ENCODE measurements at regions of chr16 and their contacts with region 1.

Region 1: GRCh38 chr16:660459-661183 is 7.3 kb upstream of the RHOT2 start:
- DNase-seq: peak; percentile 77
- ATAC-seq: peak; percentile 96
- H3K4me3 ChIP-seq: no peak overlapping the region
- H3K27ac ChIP-seq: no peak overlapping the region
- H3K4me1 ChIP-seq: peaks cover 5% of the 10 kb centered on the region
- H3K27me3 ChIP-seq: no peaks in the 10 kb centered on the region
- CTCF ChIP-seq: peak; percentile 37
- POLR2A ChIP-seq: no peak
- RAD21 ChIP-seq: peak; percentile 23

Region 2: GRCh38 chr16:578870-579405 is 81.7 kb before region 1 on chr16:
- CTCF ChIA-PET with region 1: no interaction called
- POLR2A ChIA-PET with region 1: no interaction called
- dilution Hi-C with region 1: no loop called
- in situ Hi-C with region 1: no loop called
- intact Hi-C with region 1: loop called (anchors 2 kb)
- DNase-seq: peak; percentile 65
- ATAC-seq: peak; percentile 91
- H3K4me3 ChIP-seq: no peak overlapping the region
- H3K27ac ChIP-seq: no peak overlapping the region
- H3K4me1 ChIP-seq: no peaks in the 10 kb centered on the region
- H3K27me3 ChIP-seq: no peaks in the 10 kb centered on the region
- CTCF ChIP-seq: peak; percentile 78
- POLR2A ChIP-seq: no peak
- RAD21 ChIP-seq: peak; percentile 85

Region 3: DNA sequence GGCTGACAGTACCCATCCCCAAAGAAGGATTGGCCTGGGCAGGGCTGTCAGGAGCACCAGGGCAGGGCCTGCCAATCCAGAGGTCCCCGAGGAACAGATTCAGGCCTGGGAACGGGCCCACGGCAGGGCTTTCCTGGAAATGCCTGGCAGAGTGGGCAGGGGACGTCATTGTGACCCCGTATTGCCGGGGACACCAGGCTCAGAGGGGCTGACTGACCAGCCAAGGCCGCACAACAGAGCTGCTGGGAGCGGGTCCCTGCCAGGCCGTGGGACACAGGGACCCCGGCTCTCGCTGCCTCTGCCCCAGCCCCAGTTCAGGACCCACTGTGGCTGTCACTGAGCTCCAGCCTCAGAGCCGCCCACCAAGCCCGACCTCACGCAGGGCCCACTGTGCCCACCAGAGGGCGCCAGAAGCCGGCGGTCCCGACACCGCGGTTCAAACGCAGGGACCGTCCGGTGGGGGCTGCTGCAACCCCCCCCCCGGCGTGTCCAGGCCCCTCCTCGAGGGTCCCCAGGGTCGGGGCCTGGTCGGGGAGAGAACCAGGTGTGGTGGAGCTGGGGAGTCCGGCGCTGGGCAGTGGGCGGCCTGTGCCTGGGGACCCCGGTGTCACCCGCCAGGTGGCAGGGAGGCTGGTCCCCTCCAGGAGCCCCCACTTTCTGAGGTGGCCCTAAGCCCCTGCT is 396.8 kb after region 1 on chr16:
- CTCF ChIA-PET with region 1: no interaction called
- POLR2A ChIA-PET with region 1: no interaction called
- dilution Hi-C with region 1: no loop called
- in situ Hi-C with region 1: no loop called
- intact Hi-C with region 1: no loop called
- DNase-seq: no peak
- ATAC-seq: 0 out of 2 replicates have a peak, but pooled peaks have one; percentile 55
- H3K4me3 ChIP-seq: no peak overlapping the region
- H3K27ac ChIP-seq: no peak overlapping the region
- H3K4me1 ChIP-seq: no peaks in the 10 kb centered on the region
- H3K27me3 ChIP-seq: peaks cover 7% of the 10 kb centered on the region; the same call in 1 of the 2 replicates
- CTCF ChIP-seq: peak; percentile 65
- POLR2A ChIP-seq: no peak
- RAD21 ChIP-seq: peak; percentile 67

Measured in IMR-90 (cell line).